ENCODE measurements at regions of chr2 and their contacts with region 1.

Region 1: GRCh38 chr2:176096986-176097819 is 2.4 kb upstream of the HOXD12 start:
- DNase-seq: peak; percentile 76

Region 2: DNA sequence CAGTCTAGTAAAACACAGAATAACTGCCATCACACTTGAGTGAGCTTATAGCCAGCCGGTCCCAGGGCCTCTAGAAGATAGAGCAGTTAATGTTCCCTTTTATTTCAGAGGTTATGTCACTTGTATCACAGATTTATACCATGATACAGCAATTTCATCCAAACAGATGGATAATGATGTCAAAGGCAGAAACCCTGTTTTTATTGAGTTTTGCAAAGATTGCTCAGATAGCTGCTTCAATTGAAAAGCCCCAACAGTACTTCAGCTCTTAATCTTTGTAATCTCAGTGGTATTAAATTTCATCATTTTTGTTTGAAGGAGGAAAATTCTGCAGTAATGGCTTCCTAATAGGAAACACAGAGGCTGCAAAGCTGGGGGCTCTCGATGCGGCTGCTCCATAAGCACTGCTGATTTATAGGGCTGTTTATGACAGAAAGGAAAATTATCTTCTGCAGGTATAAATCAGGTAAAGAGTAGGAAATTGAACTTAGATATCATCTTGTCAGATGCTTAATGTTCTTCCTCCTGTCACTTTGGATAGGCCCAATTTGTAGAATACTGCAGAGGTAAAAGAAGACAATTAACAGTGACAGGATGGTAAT is 207.4 kb before region 1 on chr2:
- CTCF ChIA-PET with region 1: no interaction called
- POLR2A ChIA-PET with region 1: no interaction called
- DNase-seq: no peak

Region 3: DNA sequence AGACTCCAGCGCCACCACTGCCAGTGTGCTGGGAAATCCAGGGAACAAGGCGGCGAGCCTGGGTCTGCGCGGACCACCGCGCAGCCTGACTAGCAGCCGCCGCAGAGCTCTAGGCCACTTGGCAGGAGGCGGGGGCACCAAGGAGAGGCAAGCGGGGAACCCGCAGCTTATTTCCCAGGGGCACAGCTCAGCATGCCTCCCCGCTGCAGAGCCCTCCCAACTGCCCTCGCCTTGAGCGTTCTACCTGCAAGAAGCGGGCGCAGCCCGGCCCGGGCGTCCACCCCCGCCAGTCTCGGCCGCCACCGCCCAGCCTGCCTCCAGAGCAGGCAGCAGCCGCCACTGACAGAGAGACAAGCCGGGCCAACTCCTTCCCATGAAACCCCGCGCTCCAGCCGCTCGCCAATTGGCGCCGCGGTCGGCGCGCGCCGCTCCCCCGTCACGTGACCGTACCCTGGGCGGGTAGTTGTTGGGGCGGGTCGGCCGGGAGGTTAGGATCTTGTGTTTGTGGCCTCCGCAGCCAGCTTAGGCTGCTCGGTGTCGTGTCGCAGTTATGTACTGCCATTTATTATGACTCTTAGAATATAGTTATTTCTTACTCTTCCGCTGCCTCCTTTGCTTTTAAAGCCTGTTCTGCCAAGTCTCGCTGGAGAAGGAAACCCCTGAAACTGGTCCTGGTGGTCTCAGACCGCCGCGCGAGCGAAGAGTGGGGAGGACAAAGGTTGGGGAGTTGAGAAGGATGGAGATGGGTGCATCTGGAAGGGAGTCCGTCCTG is 95.1 kb before region 1 on chr2 and contains the start of gene LNPK:
- CTCF ChIA-PET with region 1: no interaction called
- POLR2A ChIA-PET with region 1: interaction called, 10 read pairs
- DNase-seq: peak; percentile 93

Region 4: GRCh38 chr2:176079831-176080539 is 17.2 kb before region 1 on chr2:
- CTCF ChIA-PET with region 1: interaction called, 9 read pairs
- POLR2A ChIA-PET with region 1: interaction called, 11 read pairs
- DNase-seq: peak; percentile 87

Region 5: GRCh38 chr2:176285321-176285720 is 188.1 kb after region 1 on chr2:
- CTCF ChIA-PET with region 1: no interaction called
- POLR2A ChIA-PET with region 1: no interaction called
- DNase-seq: peak; percentile 22

Measured in HEK293T (cell line).